B cell (primary cell): ENCODE measurements at regions of chr4 and their contacts with region 1.

Region 1: DNA sequence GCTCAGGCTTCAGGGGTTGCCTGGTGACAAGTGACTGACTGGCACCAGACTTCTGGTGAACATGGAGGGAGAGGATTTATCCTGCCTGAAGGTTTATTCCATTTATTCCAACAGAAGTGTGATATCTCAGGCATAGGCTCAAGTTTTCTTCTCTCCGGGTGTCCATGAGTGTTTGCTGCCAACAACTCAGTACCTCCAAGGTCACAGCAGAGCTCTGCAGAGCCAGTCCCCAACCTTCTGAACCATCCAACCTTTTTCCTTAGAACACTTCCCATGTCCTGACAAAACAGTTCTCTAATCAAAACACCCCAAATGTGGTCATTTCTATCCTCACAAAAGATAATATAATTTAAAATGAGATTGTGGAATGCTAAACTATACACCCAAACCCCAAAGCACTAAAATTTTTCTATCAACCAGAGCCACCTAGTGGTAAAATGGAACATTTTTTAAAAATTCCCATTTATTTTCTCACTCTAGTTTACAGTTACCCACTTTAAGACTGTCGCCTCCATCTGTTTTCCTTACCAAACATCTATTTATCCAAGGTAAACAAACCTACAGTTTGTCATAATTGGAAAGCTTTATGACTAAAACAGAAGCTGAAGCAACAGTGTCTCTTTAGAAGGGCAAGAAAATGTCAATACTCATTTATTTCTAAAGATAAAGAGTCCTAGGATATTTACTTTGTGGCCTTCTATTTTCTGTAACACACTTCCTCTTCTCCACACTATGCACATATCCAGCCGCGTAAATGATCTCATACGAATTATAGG is 39.6 kb downstream of the TMEM154 start:
- DNase-seq: peak; percentile 42
- ATAC-seq: no peak
- H3K4me3 ChIP-seq: no peak overlapping the region
- H3K4me3 Mint-ChIP-seq: no peak overlapping the region
- H3K27ac ChIP-seq: peak overlapping the region in 1 of 2 donors; percentile 7
- H3K27ac Mint-ChIP-seq: peak overlapping the region; percentile 10
- H3K4me1 ChIP-seq: peaks cover 30 to 35% of the 10 kb centered on the region in 2 donors
- H3K4me1 Mint-ChIP-seq: peaks cover 67% of the 10 kb centered on the region
- H3K27me3 ChIP-seq: no peaks in the 10 kb centered on the region
- H3K27me3 Mint-ChIP-seq: no peaks in the 10 kb centered on the region
- CTCF ChIP-seq: peak; percentile 79

Region 2: GRCh38 chr4:152454398-152455011 is 185.7 kb before region 1 on chr4:
- CTCF ChIA-PET with region 1: interaction called, 18 read pairs
- POLR2A ChIA-PET with region 1: no interaction called
- intact Hi-C with region 1: loop called (anchors 1 kb)
- DNase-seq: peak; percentile 37
- ATAC-seq: no peak
- H3K4me3 ChIP-seq: no peak overlapping the region
- H3K4me3 Mint-ChIP-seq: no peak overlapping the region
- H3K27ac ChIP-seq: no peak overlapping the region
- H3K27ac Mint-ChIP-seq: no peak overlapping the region
- H3K4me1 ChIP-seq: peaks cover 23 to 27% of the 10 kb centered on the region in 2 donors
- H3K4me1 Mint-ChIP-seq: peaks cover 50% of the 10 kb centered on the region
- H3K27me3 ChIP-seq: no peaks in the 10 kb centered on the region
- H3K27me3 Mint-ChIP-seq: no peaks in the 10 kb centered on the region
- CTCF ChIP-seq: peak; percentile 77

Region 3: GRCh38 chr4:152535903-152536544 is 104.2 kb before region 1 on chr4 and contains the start of gene FBXW7:
- CTCF ChIA-PET with region 1: interaction called, 19 read pairs
- POLR2A ChIA-PET with region 1: interaction called, 4 read pairs
- intact Hi-C with region 1: loop called (anchors 1 kb)
- DNase-seq: peak; percentile 100
- ATAC-seq: peak; percentile 83
- H3K4me3 ChIP-seq: peak within 1 kb of the TSS; percentile 58 to 91 (median 81)
- H3K4me3 Mint-ChIP-seq: peak within 1 kb of the TSS; percentile 98
- H3K27ac ChIP-seq: peak within 1 kb of the TSS; percentile 83 to 88
- H3K27ac Mint-ChIP-seq: peak within 1 kb of the TSS; percentile 96
- H3K4me1 ChIP-seq: peaks cover 27 to 36% of the 10 kb centered on the region in 2 donors
- H3K4me1 Mint-ChIP-seq: peaks cover 67% of the 10 kb centered on the region
- H3K27me3 ChIP-seq: no peaks in the 10 kb centered on the region
- H3K27me3 Mint-ChIP-seq: no peaks in the 10 kb centered on the region
- CTCF ChIP-seq: no peak
- total RNA-seq, gene FBXW7: 117 and 125 TPM in 2 replicates

Region 4: DNA sequence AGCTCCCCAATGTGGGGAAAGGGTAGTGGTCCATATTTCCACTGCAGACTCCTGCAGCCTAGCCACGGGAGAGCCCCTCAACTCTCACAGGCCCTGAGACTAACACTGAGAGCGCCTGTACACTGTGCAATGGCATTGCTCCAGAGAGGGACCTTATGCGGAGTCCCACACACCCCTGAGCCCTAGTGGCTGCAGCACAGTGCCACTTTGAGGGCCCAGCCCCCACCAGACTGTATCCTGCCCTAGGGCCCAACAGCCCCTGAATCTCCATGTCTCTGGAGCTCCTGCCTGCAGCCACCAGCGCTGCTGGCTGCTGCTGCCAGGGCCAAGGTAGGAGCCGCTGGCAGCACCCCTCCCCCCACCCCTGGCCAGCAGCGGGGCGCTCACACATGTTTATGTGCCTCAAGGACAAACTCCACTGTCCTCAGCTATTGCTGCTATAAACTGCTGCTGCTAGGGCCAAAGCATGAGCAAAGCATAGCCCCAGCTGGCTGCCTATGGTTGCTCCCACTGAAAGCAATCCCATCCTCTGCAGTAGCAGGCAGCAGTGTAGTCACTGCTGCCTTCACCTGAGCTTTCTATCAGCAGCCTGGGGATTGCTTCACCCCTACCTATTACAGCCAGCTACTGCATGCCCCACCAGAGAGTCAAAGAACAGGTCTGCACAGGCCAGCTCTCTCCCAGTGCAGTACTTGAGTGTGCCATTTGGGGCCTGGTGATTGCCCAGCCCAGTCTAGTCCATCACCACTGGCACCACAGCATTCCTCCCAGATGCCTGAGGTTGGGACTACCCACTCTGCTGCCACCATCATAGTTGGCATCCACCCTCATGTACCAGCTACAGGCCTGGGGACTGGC is 15.3 kb after region 1 on chr4:
- CTCF ChIA-PET with region 1: interaction called, 13 read pairs
- POLR2A ChIA-PET with region 1: interaction called, 9 read pairs
- intact Hi-C with region 1: no loop called
- DNase-seq: no peak
- ATAC-seq: no peak
- H3K4me3 ChIP-seq: no peak overlapping the region
- H3K4me3 Mint-ChIP-seq: no peak overlapping the region
- H3K27ac ChIP-seq: peak overlapping the region in 1 of 2 donors; percentile 28
- H3K27ac Mint-ChIP-seq: peak overlapping the region; percentile 78
- H3K4me1 ChIP-seq: peaks cover 38 to 41% of the 10 kb centered on the region in 2 donors
- H3K4me1 Mint-ChIP-seq: peaks cover 48% of the 10 kb centered on the region
- H3K27me3 ChIP-seq: no peaks in the 10 kb centered on the region
- H3K27me3 Mint-ChIP-seq: no peaks in the 10 kb centered on the region
- CTCF ChIP-seq: no peak

Region 5: GRCh38 chr4:152679414-152680281 is 39.4 kb after region 1 on chr4 and contains the start of gene TMEM154:
- CTCF ChIA-PET with region 1: interaction called, 112 read pairs
- POLR2A ChIA-PET with region 1: interaction called, 5 read pairs
- intact Hi-C with region 1: loop called (anchors 1 kb)
- DNase-seq: peak; percentile 89
- ATAC-seq: peak; percentile 89
- H3K4me3 ChIP-seq: peak within 1 kb of the TSS; percentile 60 to 97 (median 85)
- H3K4me3 Mint-ChIP-seq: peak within 1 kb of the TSS; percentile 92
- H3K27ac ChIP-seq: peak within 1 kb of the TSS; percentile 73 to 81
- H3K27ac Mint-ChIP-seq: peak within 1 kb of the TSS; percentile 97
- H3K4me1 ChIP-seq: peaks cover 61 to 69% of the 10 kb centered on the region in 2 donors
- H3K4me1 Mint-ChIP-seq: peaks cover 76% of the 10 kb centered on the region
- H3K27me3 ChIP-seq: no peaks in the 10 kb centered on the region
- H3K27me3 Mint-ChIP-seq: no peaks in the 10 kb centered on the region
- CTCF ChIP-seq: no peak
- total RNA-seq, gene TMEM154: 96.6 and 99.1 TPM in 2 replicates

Region 6: DNA sequence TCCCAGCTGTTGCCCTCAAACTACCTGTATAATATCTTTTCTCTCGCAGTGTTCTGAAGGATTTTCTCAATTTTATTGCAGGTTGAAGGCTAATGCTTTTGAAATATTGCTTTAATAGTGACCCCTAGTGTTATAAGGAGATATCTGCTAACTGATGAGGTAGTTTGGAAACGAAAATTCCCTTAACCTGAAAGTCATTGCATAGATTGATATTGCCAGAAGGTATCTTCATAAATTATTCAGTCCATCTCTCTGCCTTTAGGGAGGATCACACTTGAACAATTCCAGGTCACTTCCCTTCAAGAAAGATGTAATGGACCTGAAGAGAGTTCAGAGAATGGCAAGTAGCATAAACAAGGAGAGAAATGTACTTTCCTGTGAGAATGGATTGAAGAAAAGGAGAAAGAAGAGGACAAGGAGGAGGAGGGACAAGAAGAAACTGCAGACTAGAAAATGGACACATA is 95.2 kb after region 1 on chr4:
- CTCF ChIA-PET with region 1: interaction called, 32 read pairs
- POLR2A ChIA-PET with region 1: no interaction called
- intact Hi-C with region 1: loop called (anchors 1 kb)
- DNase-seq: peak; percentile 64
- ATAC-seq: peak; percentile 57
- H3K4me3 ChIP-seq: no peak overlapping the region
- H3K4me3 Mint-ChIP-seq: no peak overlapping the region
- H3K27ac ChIP-seq: no peak overlapping the region
- H3K27ac Mint-ChIP-seq: no peak overlapping the region
- H3K4me1 ChIP-seq: peaks cover 5 to 12% of the 10 kb centered on the region in 2 donors
- H3K4me1 Mint-ChIP-seq: peaks cover 16% of the 10 kb centered on the region
- H3K27me3 ChIP-seq: no peaks in the 10 kb centered on the region
- H3K27me3 Mint-ChIP-seq: no peaks in the 10 kb centered on the region
- CTCF ChIP-seq: peak; percentile 80